ENCODE measurements at regions of chr15 and their contacts with region 1.

Region 1: DNA sequence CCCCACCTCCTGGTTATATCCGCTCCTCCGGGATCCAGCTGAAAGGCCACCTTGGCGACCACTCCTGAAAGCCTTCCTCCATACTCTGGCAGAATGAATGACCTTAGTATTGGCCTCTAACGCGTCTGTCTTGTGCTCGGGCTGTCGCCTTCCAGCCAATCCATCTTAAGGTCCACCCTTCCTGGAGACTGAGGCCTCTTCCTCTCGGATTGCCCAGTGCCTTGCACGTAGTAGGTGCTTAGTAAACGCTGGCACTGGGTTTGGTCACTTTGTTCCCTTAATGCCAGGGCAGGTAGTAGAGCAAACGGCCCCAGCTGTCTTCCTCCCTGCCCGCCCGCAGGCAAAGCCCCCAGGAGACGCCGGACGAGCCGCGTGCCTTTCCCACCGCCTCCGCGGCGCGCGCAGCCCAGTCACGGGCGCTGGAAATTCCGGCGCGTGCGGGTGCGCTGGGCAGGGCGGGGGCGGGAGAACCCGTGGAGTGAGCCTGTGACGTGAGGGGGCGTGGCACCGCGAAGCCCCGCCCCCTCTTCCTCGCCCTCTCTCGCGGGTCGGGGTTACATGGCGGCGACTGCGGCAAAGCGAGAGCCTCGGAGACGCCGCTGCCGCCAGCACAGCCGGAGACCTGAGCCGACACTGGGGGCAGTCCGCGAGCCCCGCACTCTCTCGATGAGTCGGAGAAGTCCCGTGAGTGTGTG is at the start of gene MAPK6:
- DNase-seq: peak; percentile 93
- H3K4me3 ChIP-seq: peak within 1 kb of the TSS; percentile 67 to 71
- H3K27ac ChIP-seq: peak within 1 kb of the TSS; percentile 96
- H3K4me1 ChIP-seq: no peaks in the 10 kb centered on the region
- H3K27me3 ChIP-seq: no peaks in the 10 kb centered on the region
- CTCF ChIP-seq: peak in 1 of 4 experiments; percentile 12
- POLR2A ChIP-seq: peak; percentile 97
- total RNA-seq, gene MAPK6: 22.1 to 23.8 TPM

Region 2: GRCh38 chr15:51971375-51972133 is 47.3 kb before region 1 on chr15 and contains the start of gene LEO1:
- intact Hi-C with region 1: loop called (anchors 5 kb)
- DNase-seq: peak; percentile 93
- H3K4me3 ChIP-seq: peak within 1 kb of the TSS; percentile 79 to 81
- H3K27ac ChIP-seq: peak within 1 kb of the TSS; percentile 87 to 91
- H3K4me1 ChIP-seq: no peaks in the 10 kb centered on the region
- H3K27me3 ChIP-seq: no peaks in the 10 kb centered on the region
- CTCF ChIP-seq: peak in 3 of 4 experiments; percentile 30 to 56 (median 31)
- POLR2A ChIP-seq: peak; percentile 47
- total RNA-seq, gene LEO1: 14.4 to 24.2 TPM

Region 3: GRCh38 chr15:52261498-52262242 is 242.8 kb after region 1 on chr15:
- intact Hi-C with region 1: loop called (anchors 5 kb)
- DNase-seq: peak; percentile 68
- H3K4me3 ChIP-seq: no peak overlapping the region
- H3K27ac ChIP-seq: peak overlapping the region; percentile 63 to 72
- H3K4me1 ChIP-seq: peaks cover 9% of the 10 kb centered on the region
- H3K27me3 ChIP-seq: no peaks in the 10 kb centered on the region
- CTCF ChIP-seq: peak in 2 of 4 experiments; percentile 40 to 42
- POLR2A ChIP-seq: peak; percentile 29

Region 4: GRCh38 chr15:52308446-52309153 is 289.8 kb after region 1 on chr15:
- intact Hi-C with region 1: no loop called
- DNase-seq: no peak
- H3K4me3 ChIP-seq: no peak overlapping the region
- H3K27ac ChIP-seq: no peak overlapping the region
- H3K4me1 ChIP-seq: no peaks in the 10 kb centered on the region
- H3K27me3 ChIP-seq: no peaks in the 10 kb centered on the region
- CTCF ChIP-seq: no peak
- POLR2A ChIP-seq: no peak